Activated T-helper 1 cell treated with anti-CD3 and anti-CD28 coated beads, Interleukin-12 subunit alpha, Interleukin-12 subunit beta, Interleukin-2, Interleukin-4 antibody, amounts not matched to agents 30 ng/mL and 10 ng/mL and 1 ng/mL, durations not matched to agents 14 hours and 24 hours and 36 hours (primary cell): ENCODE measurements at regions of chr10 and their contacts with region 1.

Region 1: DNA sequence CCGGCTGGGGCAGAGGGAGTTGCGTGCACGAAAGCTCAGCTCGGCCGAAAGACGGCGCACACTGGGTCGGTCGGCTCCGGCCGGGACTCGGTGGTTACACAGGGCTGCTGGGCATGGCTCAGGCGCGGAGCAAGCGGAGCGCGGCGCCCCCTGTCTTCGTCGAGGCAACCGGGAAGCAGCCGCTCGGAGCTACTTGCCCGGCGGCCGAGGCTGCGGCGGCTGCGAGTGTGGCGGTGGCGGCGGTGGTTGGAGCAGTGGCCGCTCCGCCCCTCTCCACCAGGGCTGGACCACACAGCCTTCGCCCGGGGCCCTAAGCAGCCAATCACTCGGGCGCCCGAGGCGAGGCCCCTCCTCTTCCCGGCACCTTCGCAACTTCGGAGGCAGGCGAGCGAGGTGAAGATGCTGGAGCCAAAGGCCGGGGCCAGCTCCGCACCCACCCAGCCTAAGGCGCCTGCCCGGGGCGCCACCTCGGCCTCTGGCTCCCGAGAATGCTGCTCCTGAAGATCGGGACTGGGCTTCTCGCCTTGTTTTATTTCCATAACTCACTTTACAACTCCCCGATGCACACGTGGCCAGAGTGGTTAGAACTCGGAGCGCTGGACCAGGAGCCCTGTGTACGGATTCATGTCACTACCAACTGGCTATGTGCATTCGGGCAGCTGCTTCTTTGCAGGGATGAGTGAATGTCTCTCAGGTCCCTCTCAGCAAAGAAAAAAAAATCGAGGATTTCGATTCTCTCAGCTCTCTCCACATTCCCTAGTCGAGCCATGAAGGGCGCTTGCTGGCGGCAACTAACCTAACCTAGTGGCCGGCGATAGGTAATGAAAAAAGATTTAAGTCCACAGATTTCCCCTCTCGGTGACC is at the start of gene TLL2:
- DNase-seq: peak; percentile 63
- H3K4me3 Mint-ChIP-seq: peak within 1 kb of the TSS; percentile 66
- H3K27ac Mint-ChIP-seq: no peak within 1 kb of the TSS
- H3K4me1 Mint-ChIP-seq: peaks cover 7% of the 10 kb centered on the region
- H3K27me3 Mint-ChIP-seq: peaks cover 33% of the 10 kb centered on the region
- total RNA-seq, gene TLL2: 0.07 TPM in 1 of 2 replicates, not detected in the other

Region 2: DNA sequence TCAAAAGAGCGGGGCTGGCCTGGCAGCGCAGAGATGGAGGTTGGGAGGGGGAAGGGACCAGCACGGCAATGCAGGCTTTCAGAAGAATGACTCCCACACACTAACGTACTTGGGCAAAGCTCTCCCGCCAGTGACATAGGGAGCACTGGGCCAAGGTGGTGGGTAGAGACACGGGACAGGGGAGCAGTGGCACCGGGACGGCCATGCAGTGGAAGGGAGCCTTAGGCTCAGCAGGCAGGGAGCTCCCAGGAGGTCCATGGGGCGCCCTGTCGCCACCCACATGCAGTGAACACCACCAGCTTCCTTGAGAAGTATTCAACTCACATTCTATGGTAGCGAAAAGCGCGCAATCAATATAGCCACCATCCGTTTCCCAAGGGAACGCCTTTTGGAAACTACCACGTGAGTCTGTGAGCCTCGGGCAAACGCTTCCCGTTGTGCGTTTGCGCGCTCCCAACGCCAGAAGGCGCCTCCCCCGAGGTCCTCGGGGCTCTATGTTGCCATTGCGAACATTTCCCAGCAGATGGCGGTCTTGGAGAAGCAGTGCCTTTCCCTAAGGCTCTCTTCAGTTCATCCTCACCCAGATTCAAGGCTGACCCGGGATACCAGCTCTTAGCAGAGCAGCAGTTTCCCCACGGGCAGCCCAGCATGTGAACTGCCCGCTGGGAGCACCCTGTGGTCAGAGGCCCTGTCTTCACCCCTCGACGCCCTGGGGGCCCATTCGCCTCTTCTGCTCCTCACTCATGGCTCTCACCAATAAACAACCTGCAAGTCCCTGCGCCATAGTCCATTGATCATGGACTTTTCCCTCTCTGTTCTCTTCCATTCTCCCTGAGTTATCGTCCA is 138.7 kb before region 1 on chr10:
- intact Hi-C with region 1: loop called (anchors 2 kb)
- DNase-seq: peak; percentile 60
- H3K4me3 Mint-ChIP-seq: peak overlapping the region; percentile 74
- H3K27ac Mint-ChIP-seq: no peak overlapping the region
- H3K4me1 Mint-ChIP-seq: peaks cover 18% of the 10 kb centered on the region
- H3K27me3 Mint-ChIP-seq: peaks cover 13% of the 10 kb centered on the region

Region 3: DNA sequence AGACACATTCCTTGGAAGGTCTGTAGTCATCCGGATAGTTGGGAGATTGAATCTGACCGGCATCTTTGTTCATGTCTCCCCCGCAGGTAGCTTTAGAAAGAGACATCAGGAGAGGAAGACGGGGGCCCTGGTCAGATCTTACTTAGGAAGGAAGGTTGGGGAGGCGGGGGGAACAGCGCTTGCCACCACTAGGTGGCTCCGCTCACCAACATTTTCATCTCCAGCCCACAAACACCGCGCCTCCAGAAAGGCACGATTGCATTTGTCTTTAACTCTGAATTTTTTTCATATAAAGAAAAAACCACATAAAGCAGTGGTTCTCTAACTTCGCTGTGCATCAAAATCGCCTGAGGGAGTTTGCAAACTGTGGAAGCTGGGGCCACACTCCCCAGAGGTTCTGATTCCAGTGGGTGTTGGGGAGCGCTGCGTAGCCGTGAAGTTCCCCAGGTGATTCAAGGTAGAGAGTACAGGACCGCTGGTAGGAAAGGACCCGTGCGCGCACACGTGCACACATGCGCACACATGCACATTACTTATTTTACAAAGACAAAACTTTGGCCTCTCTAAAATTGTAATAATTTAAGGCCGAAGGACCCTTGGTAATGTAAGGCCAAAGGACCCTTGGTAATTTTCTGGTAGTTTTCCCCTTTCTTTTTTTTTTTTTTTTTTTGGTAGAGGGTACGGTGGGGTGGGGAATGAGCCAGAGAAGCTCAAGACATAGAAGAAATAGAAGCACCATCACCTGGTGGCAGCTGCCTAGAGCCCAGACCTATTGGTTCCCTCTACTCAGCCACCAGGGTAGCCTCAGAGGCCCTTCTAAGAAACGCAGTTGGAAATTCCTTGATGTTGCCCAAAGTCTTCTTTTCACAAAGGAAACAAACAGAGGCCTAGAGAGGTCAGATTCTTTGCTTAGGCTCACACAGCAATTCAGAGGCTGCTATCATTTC is 117.7 kb before region 1 on chr10:
- intact Hi-C with region 1: loop called (anchors 1 kb)
- DNase-seq: peak; percentile 21
- H3K4me3 Mint-ChIP-seq: no peak overlapping the region
- H3K27ac Mint-ChIP-seq: no peak overlapping the region
- H3K4me1 Mint-ChIP-seq: no peaks in the 10 kb centered on the region
- H3K27me3 Mint-ChIP-seq: peaks cover 37% of the 10 kb centered on the region

Region 4: DNA sequence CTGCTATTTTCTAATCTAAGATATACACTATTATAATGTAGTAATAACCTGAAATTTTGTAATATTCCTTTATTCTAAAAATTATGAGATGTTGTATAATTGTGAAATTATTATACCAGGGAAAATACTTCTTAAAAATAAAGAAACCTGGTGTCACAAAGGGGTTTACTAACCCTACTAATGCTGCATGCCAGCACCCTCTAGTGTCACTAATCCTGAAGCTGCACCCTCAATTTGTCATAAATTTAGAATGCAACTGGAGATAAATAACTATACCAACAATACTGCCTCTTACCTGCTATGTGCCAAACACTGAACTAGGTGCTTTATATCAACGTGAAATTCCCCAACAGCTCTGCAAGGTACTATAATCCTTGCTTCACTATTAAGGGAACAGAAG is 42.1 kb after region 1 on chr10:
- intact Hi-C with region 1: no loop called
- DNase-seq: no peak
- H3K4me3 Mint-ChIP-seq: no peak overlapping the region
- H3K27ac Mint-ChIP-seq: no peak overlapping the region
- H3K4me1 Mint-ChIP-seq: no peaks in the 10 kb centered on the region
- H3K27me3 Mint-ChIP-seq: no peaks in the 10 kb centered on the region